Panc1 (cell line): ENCODE measurements at regions of chr2 and their contacts with region 1.

Region 1: DNA sequence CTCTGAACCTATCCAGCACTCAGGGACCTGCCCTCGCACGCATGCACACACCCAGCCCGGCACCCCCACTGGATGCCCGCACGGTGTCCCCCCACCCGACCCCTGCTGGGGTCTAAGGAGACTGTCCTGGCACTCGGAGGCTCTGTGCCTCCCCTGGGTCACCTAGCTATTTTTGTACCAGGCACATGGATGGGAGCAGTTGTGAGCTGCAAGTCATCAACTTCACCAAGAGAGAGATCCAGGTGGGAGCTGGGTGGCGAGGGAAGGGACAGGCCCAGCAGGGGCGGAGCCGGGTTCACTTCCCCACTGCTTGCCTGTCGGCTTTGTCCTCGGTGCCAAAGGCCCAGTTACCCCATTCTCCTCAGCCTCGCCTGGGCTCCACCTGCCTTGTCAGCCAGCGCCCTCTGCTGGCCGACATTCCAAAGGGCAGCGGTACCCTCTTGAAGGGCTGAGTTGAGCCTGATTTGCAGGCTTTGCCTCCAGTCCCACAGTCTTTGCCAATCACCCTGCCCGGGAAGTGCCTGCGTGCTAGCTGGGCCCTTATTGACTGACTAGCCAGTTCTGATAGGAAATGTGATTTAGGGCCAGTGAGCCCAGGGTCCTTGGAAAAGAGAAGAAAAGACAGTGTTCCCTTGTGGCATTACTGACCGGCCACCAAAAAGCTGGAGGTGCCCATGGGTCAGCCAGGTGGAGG is 5.8 kb downstream of the NT5DC4 start:
- DNase-seq: peak; percentile 80
- ATAC-seq: peak; percentile 93
- H3K4me3 ChIP-seq: no peak overlapping the region
- H3K27ac ChIP-seq: no peak overlapping the region; the same call in 1 of the 2 replicates
- H3K4me1 ChIP-seq: peaks cover 4% of the 10 kb centered on the region; the same call in 1 of the 2 replicates
- H3K27me3 ChIP-seq: no peaks in the 10 kb centered on the region
- CTCF ChIP-seq: peak; percentile 97

Region 2: GRCh38 chr2:112601751-112602150 is 124.9 kb before region 1 on chr2:
- CTCF ChIA-PET with region 1: interaction called, 5 read pairs
- POLR2A ChIA-PET with region 1: no interaction called
- in situ Hi-C with region 1: no loop called
- intact Hi-C with region 1: loop called (anchors 1 kb)
- DNase-seq: no peak
- ATAC-seq: no peak
- H3K4me3 ChIP-seq: no peak overlapping the region
- H3K27ac ChIP-seq: no peak overlapping the region
- H3K4me1 ChIP-seq: no peaks in the 10 kb centered on the region
- H3K27me3 ChIP-seq: no peaks in the 10 kb centered on the region
- CTCF ChIP-seq: no peak

Region 3: DNA sequence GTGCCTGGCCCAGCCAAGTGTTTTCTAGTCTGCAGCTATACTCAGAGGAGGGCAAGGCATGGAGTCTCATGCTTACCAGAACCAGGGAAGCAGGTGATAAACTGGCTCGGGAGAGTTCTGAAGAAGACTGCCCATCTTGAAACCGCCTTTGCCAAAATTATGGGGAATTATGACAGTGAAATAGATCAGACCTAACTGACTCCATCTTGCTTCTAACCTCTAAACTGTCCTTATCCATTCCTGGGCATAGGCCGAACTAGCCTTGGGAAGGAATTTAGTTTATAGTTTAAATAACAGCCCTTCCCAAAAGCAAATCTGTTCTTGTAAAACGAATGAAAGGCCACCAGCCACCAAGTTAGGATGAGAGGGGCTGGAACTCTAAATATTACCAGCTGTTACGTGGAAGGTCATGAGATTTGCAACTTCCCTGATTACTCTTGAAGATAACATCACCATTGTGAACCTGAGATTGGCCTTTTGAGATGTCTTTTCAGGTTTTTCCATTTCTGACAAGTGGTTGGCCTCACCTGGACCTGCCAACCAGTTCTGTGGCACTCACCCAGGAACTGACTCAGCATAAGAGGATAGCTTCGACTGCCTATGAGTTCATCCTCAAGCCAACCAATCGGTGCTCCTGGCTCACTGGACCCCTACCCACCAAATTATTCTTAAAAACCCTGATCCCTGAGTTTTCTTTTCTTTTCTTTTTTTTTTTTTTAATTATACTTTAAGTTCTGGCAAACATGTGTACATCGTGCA is 118.8 kb before region 1 on chr2:
- CTCF ChIA-PET with region 1: interaction called, 10 read pairs
- POLR2A ChIA-PET with region 1: no interaction called
- in situ Hi-C with region 1: no loop called
- intact Hi-C with region 1: no loop called
- DNase-seq: no peak
- ATAC-seq: no peak
- H3K4me3 ChIP-seq: no peak overlapping the region
- H3K27ac ChIP-seq: no peak overlapping the region
- H3K4me1 ChIP-seq: no peaks in the 10 kb centered on the region
- H3K27me3 ChIP-seq: no peaks in the 10 kb centered on the region
- CTCF ChIP-seq: no peak

Region 4: GRCh38 chr2:112626604-112627059 is 100.0 kb before region 1 on chr2:
- CTCF ChIA-PET with region 1: interaction called, 38 read pairs
- POLR2A ChIA-PET with region 1: no interaction called
- in situ Hi-C with region 1: no loop called
- intact Hi-C with region 1: loop called (anchors 2 kb)
- DNase-seq: peak; percentile 73
- ATAC-seq: peak; percentile 79
- H3K4me3 ChIP-seq: peak overlapping the region; percentile 13 to 44; a peak in 3 of 4 replicates
- H3K27ac ChIP-seq: peak overlapping the region; percentile 62; the same call in 1 of the 2 replicates
- H3K4me1 ChIP-seq: peaks cover 21% of the 10 kb centered on the region
- H3K27me3 ChIP-seq: no peaks in the 10 kb centered on the region
- CTCF ChIP-seq: peak; percentile 98

Region 5: DNA sequence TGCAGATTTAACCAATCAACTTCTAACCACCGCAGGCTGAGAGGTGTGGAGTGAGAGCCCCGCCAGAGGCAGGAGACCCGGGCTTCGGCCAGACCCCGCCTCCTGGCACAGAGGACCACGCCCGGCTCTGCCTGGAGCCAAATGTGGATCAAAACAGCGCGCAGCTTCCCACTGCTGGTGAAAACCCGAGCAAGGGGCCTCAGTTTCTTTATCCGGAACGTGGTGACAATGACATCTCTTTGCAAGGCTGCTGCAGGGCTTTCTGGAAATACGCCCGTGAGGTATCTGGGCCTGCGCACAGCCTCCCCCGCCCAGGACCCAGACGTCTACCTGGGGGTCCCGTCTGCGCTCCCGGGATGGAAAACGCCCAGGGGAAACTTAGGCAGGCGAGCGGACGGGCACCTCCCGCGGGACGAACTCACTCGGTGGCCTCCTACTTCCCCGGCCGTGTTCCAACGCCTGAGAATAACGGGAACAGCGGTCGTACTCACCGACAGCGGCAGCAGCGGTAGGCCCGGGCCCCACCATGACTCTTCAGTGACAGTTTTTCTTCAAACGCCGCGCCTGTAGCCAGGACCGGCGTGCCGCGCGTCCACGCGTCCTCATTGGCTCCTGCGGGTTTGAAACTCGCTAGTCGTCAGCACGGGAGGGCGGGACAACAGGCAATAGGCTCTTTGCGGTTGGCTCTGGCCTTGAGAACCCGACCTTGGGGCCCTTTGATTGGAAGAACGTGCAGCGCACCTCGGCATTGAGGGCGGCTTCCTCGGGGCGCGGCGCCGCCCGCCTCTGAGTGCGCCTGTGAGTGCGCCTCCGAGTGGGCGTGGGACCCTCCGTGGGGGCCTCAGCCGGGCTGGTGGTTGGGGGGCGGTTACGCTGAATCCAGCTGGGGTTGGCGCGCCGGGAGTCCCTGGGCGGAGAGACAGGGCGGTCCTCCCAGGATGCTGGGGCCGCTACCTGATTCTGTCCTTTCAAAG is 37.7 kb after region 1 on chr2 and contains the start of gene CKAP2L:
- CTCF ChIA-PET with region 1: no interaction called
- POLR2A ChIA-PET with region 1: no interaction called
- in situ Hi-C with region 1: no loop called
- intact Hi-C with region 1: no loop called
- DNase-seq: peak; percentile 93
- ATAC-seq: peak; percentile 98
- H3K4me3 ChIP-seq: peak within 1 kb of the TSS; percentile 81 to 88
- H3K27ac ChIP-seq: peak within 1 kb of the TSS; percentile 90
- H3K4me1 ChIP-seq: peaks cover 11% of the 10 kb centered on the region
- H3K27me3 ChIP-seq: no peaks in the 10 kb centered on the region
- CTCF ChIP-seq: no peak
- total RNA-seq, gene CKAP2L: 27.0 TPM